AG04450 (cell line): ENCODE measurements at regions of chr16 and their contacts with region 1.

Region 1: GRCh38 chr16:51762081-51762996 is 611.3 kb upstream of the SALL1 start:
- DNase-seq: peak; percentile 53
- H3K4me3 ChIP-seq: no peak overlapping the region; the same call in 1 of the 2 replicates
- H3K27ac ChIP-seq: no peak overlapping the region
- H3K27me3 ChIP-seq: no peaks in the 10 kb centered on the region
- CTCF ChIP-seq: peak; percentile 96

Region 2: GRCh38 chr16:51146256-51146924 is 615.9 kb before region 1 on chr16:
- CTCF ChIA-PET with region 1: interaction called, 36 read pairs
- POLR2A ChIA-PET with region 1: no interaction called
- DNase-seq: no peak
- H3K4me3 ChIP-seq: peak overlapping the region; percentile 24
- H3K27ac ChIP-seq: no peak overlapping the region
- H3K27me3 ChIP-seq: no peaks in the 10 kb centered on the region
- CTCF ChIP-seq: peak; percentile 72

Region 3: DNA sequence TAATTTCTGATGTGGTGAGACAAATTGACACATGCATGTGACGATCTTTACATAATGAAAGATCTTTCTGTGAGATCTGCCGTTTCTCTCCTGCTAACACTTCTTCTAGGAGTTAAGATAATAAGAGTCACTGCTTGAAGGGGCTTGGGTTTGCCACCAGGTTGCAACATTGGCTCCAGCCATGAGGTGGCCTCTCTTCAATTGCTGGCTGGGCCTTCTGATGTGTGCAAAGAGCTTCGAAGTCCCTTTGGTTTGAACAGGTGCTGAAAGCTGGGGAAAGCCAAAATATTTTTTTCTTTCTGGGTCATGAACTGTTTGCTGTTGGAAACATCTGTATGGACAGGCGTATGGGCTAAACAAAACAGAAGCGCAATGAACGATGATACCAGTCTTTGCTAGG is 407.1 kb before region 1 on chr16:
- CTCF ChIA-PET with region 1: interaction called, 10 read pairs
- POLR2A ChIA-PET with region 1: no interaction called
- DNase-seq: no peak
- H3K4me3 ChIP-seq: no peak overlapping the region
- H3K27ac ChIP-seq: no peak overlapping the region
- H3K27me3 ChIP-seq: peaks cover 2% of the 10 kb centered on the region
- CTCF ChIP-seq: no peak

Region 4: DNA sequence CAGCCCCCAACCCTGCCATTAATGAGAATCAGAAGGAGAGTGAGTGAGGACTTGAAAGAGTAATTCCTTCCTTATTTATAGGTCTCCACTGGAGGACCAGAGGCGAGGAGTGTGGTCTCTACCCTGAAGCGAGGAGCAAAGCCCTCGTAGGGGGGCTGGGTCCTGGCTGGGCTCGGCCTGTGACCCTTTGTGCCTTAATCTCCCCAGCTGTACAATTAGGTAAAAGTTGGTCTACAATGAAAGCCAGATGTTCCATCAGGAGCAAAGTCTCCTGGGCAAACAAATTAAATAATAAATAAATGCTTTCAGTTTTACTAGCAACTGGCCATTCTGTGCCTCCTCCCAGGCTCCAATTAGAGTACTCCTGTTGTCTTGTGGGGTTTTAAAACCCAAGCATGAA is 87.7 kb before region 1 on chr16:
- CTCF ChIA-PET with region 1: interaction called, 10 read pairs
- POLR2A ChIA-PET with region 1: no interaction called
- DNase-seq: no peak
- H3K4me3 ChIP-seq: no peak overlapping the region
- H3K27ac ChIP-seq: no peak overlapping the region
- H3K27me3 ChIP-seq: no peaks in the 10 kb centered on the region
- CTCF ChIP-seq: no peak

Region 5: GRCh38 chr16:51685498-51685897 is 76.8 kb before region 1 on chr16:
- CTCF ChIA-PET with region 1: no interaction called
- POLR2A ChIA-PET with region 1: no interaction called
- DNase-seq: no peak
- H3K4me3 ChIP-seq: no peak overlapping the region
- H3K27ac ChIP-seq: no peak overlapping the region
- H3K27me3 ChIP-seq: no peaks in the 10 kb centered on the region
- CTCF ChIP-seq: no peak

Region 6: GRCh38 chr16:51982715-51983680 is 220.7 kb after region 1 on chr16:
- CTCF ChIA-PET with region 1: interaction called, 14 read pairs
- POLR2A ChIA-PET with region 1: no interaction called
- DNase-seq: peak; percentile 47
- H3K4me3 ChIP-seq: no peak overlapping the region
- H3K27ac ChIP-seq: no peak overlapping the region
- H3K27me3 ChIP-seq: no peaks in the 10 kb centered on the region
- CTCF ChIP-seq: peak; percentile 74